Psoas muscle (tissue), 8 donors: ENCODE measurements at regions of chr6 and their contacts with region 1.

Region 1: DNA sequence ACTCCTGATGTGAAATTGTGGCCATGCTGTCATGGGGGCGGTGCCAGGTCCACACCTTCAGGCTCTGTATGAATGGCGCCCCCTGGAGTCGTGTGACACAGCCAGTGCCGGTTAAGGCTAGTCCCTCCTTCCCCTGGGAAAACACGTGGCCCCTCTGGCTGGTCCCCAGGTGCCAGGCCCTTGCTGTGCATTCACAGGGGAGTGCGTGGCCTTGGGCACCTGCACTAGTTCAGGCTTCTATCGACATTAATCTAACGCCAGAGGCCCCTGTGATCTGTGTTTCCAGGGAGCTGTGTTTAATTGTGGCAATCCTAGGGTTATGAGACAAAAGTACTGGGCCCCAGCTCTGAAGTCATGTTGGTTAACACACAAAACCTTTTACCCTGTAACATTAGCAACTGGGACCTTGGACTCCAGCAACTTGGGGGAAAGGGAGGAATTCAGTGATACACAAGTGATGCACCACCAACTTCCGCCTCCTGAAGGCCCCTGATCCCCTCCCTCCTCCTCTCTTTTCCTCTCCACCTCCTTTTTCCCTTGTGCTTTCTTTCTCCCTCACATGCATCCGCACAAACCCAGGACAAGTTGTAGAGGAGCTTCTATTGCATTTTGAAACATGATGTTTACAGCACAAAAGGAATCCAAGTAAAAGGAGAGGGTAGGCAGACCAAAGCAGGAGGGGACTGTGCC is 74.0 kb downstream of the SSR1 start:
- DNase-seq: peak; percentile 90 to 95
- ATAC-seq: peak; percentile 87 to 91 (median 89)
- H3K4me3 ChIP-seq: no peak overlapping the region
- H3K27ac ChIP-seq: peak overlapping the region; percentile 71
- H3K4me1 ChIP-seq: peaks cover 38% of the 10 kb centered on the region
- H3K27me3 ChIP-seq: no peaks in the 10 kb centered on the region
- CTCF ChIP-seq: peak; percentile 64

Region 2: DNA sequence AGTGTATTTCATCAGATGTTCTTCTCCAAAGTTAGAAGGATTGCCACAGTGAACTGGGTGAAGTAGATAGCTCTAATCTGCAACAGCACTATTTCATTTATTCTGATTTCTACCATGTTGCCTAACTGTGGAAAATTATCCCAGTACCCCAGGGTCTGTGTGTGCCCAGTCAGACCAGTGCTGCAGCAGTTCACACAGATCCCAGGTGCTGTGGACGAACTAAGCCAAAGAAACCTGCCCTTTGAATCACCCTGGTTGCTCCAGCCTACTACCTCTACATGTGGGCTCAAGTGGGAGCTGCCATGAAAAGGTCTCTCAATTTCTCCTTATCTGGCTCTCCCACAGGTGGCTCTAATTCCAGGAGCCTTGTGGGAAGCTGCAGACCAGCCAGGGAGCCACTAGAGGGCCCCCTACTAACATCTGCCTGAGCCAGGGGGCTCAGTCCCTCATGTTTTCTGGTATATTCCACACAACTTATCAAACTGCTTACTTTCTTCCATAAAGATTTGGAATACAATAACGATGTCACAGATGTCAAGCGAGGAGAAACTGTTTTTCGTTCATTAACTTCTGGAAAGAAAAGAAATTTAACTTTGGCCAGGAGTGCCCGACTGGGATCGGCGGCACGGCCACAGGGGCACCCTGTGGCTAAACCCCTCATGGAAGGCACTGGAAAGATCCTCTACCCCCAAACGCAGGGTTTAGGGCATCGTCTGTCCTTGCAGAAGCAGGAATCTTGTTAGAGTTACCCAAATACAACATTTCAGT is 682.1 kb before region 1 on chr6:
- intact Hi-C with region 1: loop called in 1 of 2 experiments (anchors 10 kb)
- DNase-seq: no peak
- ATAC-seq: peak in 2 of 4 donors; percentile 44 to 45
- H3K4me3 ChIP-seq: no peak overlapping the region
- H3K27ac ChIP-seq: no peak overlapping the region
- H3K4me1 ChIP-seq: no peaks in the 10 kb centered on the region
- H3K27me3 ChIP-seq: no peaks in the 10 kb centered on the region
- CTCF ChIP-seq: peak; percentile 63

Region 3: GRCh38 chr6:6676910-6677441 is 562.1 kb before region 1 on chr6:
- intact Hi-C with region 1: loop called in 1 of 2 experiments (anchors 2 kb)
- DNase-seq: peak; percentile 72 to 79
- ATAC-seq: peak; percentile 83 to 95 (median 91)
- H3K4me3 ChIP-seq: no peak overlapping the region
- H3K27ac ChIP-seq: no peak overlapping the region
- H3K4me1 ChIP-seq: no peaks in the 10 kb centered on the region
- H3K27me3 ChIP-seq: no peaks in the 10 kb centered on the region
- CTCF ChIP-seq: peak; percentile 98

Region 4: GRCh38 chr6:6724539-6725467 is 514.2 kb before region 1 on chr6:
- intact Hi-C with region 1: loop called (anchors 2 to 5 kb)
- DNase-seq: peak; percentile 70 to 84
- ATAC-seq: peak; percentile 91 to 96 (median 92)
- H3K4me3 ChIP-seq: peak overlapping the region; percentile 62
- H3K27ac ChIP-seq: peak overlapping the region; percentile 88
- H3K4me1 ChIP-seq: peaks cover 15% of the 10 kb centered on the region
- H3K27me3 ChIP-seq: no peaks in the 10 kb centered on the region
- CTCF ChIP-seq: peak; percentile 73

Region 5: GRCh38 chr6:6901205-6901731 is 337.8 kb before region 1 on chr6:
- intact Hi-C with region 1: loop called in 1 of 2 experiments (anchors 5 kb)
- DNase-seq: no peak
- ATAC-seq: peak; percentile 64 to 75 (median 70)
- H3K4me3 ChIP-seq: peak overlapping the region; percentile 40
- H3K27ac ChIP-seq: peak overlapping the region; percentile 87
- H3K4me1 ChIP-seq: peaks cover 7% of the 10 kb centered on the region
- H3K27me3 ChIP-seq: no peaks in the 10 kb centered on the region
- CTCF ChIP-seq: no peak

Region 6: GRCh38 chr6:7107578-7108195 is 131.4 kb before region 1 on chr6 and contains the start of gene RREB1:
- intact Hi-C with region 1: loop called (anchors 5 kb)
- DNase-seq: peak; percentile 67 to 77
- ATAC-seq: peak; percentile 81 to 86 (median 84)
- H3K4me3 ChIP-seq: peak within 1 kb of the TSS; percentile 84
- H3K27ac ChIP-seq: peak within 1 kb of the TSS; percentile 86
- H3K4me1 ChIP-seq: peaks cover 20% of the 10 kb centered on the region
- H3K27me3 ChIP-seq: no peaks in the 10 kb centered on the region
- CTCF ChIP-seq: no peak
- total RNA-seq, gene RREB1: 32.7 to 49.4 (median 39.6) TPM

Region 7: DNA sequence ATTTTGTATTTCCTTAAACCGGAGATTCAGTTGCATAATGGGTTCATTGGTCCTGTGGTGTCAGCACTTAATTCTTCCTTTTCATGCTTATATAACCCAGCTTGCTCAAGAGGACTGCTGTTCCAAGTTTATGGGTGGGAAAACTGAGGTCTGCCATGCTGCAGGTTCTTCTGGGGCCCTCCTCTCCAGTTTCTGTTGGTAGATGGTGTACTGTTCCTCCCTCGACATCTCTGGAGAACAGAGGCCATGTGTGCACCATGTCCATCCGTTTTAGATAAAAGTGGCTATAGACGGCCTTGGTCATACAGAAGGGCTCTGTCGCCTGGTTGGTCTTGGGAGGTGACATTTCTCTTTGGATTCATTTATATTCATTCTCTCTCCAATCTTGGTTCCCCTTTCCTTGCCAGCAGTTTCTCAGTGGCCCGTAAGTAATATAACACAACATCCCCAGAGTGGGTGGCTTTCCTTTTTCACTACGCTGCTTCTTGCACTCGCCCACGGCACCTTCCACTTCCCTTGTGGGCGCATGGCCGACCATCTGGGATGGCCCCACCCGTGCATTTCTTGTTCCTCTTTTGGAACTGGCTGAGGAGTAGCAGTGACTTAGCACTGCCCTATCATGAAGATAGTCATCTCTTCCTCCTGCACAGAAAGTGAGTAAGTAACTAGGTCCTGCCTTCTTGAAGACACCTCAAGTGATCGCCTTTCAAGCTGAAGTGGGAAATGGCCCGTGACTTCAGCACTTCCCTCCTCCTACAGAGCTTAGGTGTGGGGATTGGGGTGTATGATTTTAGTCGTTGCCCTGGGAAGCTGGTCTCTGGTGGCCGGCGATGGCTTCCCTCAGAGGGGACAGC is 37.1 kb before region 1 on chr6:
- intact Hi-C with region 1: no loop called
- DNase-seq: peak; percentile 37 to 64
- ATAC-seq: peak in 3 of 4 donors; percentile 35 to 41 (median 37)
- H3K4me3 ChIP-seq: no peak overlapping the region
- H3K27ac ChIP-seq: no peak overlapping the region
- H3K4me1 ChIP-seq: peaks cover 13% of the 10 kb centered on the region
- H3K27me3 ChIP-seq: no peaks in the 10 kb centered on the region
- CTCF ChIP-seq: no peak

Region 8: GRCh38 chr6:7461416-7461815 is 222.4 kb after region 1 on chr6:
- intact Hi-C with region 1: no loop called
- DNase-seq: no peak
- ATAC-seq: no peak
- H3K4me3 ChIP-seq: no peak overlapping the region
- H3K27ac ChIP-seq: no peak overlapping the region
- H3K4me1 ChIP-seq: no peaks in the 10 kb centered on the region
- H3K27me3 ChIP-seq: no peaks in the 10 kb centered on the region
- CTCF ChIP-seq: no peak